Activated CD8-positive, alpha-beta T cell treated with anti-CD3 and anti-CD28 coated beads, Interleukin-2, amount 10 ng/mL, durations not matched to agents 7 days and 5 days (primary cell): ENCODE measurements at regions of chr12 and their contacts with region 1.

Region 1: GRCh38 chr12:14167005-14167628 is 185.7 kb upstream of the GRIN2B start:
- DNase-seq: peak; percentile 50
- ATAC-seq: no peak
- H3K4me3 Mint-ChIP-seq: no peak overlapping the region
- H3K27ac Mint-ChIP-seq: no peak overlapping the region
- H3K4me1 Mint-ChIP-seq: no peaks in the 10 kb centered on the region
- H3K27me3 Mint-ChIP-seq: no peaks in the 10 kb centered on the region

Region 2: GRCh38 chr12:13864081-13864673 is 302.9 kb before region 1 on chr12:
- CTCF ChIA-PET with region 1: interaction called, 15 read pairs
- POLR2A ChIA-PET with region 1: no interaction called
- DNase-seq: peak; percentile 65
- ATAC-seq: peak; percentile 75
- H3K4me3 Mint-ChIP-seq: no peak overlapping the region
- H3K27ac Mint-ChIP-seq: no peak overlapping the region
- H3K4me1 Mint-ChIP-seq: no peaks in the 10 kb centered on the region
- H3K27me3 Mint-ChIP-seq: peaks cover 5% of the 10 kb centered on the region

Region 3: GRCh38 chr12:14111230-14111865 is 55.8 kb before region 1 on chr12:
- CTCF ChIA-PET with region 1: interaction called, 13 read pairs
- POLR2A ChIA-PET with region 1: no interaction called
- DNase-seq: peak; percentile 33
- ATAC-seq: peak; percentile 44
- H3K4me3 Mint-ChIP-seq: no peak overlapping the region
- H3K27ac Mint-ChIP-seq: no peak overlapping the region
- H3K4me1 Mint-ChIP-seq: peaks cover 4% of the 10 kb centered on the region
- H3K27me3 Mint-ChIP-seq: no peaks in the 10 kb centered on the region

Region 4: DNA sequence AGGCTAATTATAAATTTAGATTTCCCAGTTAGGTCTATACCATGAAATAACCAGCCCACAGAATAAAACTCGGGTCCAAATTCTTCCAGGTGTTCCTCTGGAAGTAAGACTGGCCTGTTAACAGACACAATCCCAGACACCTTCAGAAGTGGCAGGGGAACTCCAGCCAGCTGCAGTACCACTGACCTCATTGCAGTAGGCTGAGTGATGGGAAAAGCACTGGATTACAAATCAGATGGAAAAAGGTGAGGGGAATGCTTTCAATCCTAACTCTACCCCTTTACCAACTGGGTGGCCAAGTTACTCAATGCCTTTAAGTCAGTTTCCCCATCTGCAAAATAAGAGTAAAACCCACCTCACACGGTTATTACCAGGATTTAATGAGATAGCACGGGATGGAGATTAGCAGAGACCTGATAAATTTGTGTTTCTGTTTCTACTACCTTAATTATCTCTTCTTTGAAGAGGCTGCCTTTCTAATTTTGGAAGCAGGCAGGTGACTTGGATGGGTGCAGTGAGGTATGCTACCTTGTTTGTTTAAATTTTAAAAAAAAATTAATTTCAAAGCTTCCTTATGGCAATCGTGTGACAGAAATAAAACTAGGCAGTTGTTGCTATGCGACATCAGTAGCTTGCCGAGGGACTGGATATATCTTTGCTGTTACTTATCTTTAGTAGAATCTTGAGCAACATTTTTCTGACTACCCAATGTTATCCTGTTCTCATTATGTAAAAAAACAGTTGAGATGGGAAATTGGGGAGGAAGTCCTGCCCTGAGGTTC is 18.4 kb before region 1 on chr12:
- CTCF ChIA-PET with region 1: no interaction called
- POLR2A ChIA-PET with region 1: no interaction called
- DNase-seq: no peak
- ATAC-seq: no peak
- H3K4me3 Mint-ChIP-seq: no peak overlapping the region
- H3K27ac Mint-ChIP-seq: no peak overlapping the region
- H3K4me1 Mint-ChIP-seq: no peaks in the 10 kb centered on the region
- H3K27me3 Mint-ChIP-seq: peaks cover 5% of the 10 kb centered on the region

Region 5: DNA sequence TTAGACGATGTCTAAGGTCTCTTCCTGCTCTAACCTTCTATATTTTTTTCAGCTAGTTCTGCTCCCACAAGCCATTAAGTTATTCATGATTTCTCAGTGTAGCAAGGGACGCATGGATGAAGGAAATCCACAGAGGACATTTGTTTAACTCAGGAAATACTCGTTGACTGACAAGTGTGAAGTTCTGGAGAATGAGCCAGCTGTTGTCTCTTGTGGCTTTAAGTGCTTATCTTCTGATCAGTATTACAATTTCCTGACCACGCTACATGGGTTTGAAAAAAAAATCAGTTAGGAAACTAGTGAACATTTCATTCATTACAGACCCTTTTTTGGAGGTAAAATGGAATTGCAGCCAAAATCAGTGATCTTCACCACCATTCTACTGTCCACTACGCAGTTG is 476.1 kb after region 1 on chr12:
- CTCF ChIA-PET with region 1: no interaction called
- POLR2A ChIA-PET with region 1: no interaction called
- DNase-seq: no peak
- ATAC-seq: peak; percentile 64
- H3K4me3 Mint-ChIP-seq: peak overlapping the region; percentile 50
- H3K27ac Mint-ChIP-seq: peak overlapping the region; percentile 72
- H3K4me1 Mint-ChIP-seq: peaks cover 23% of the 10 kb centered on the region
- H3K27me3 Mint-ChIP-seq: peaks cover 5% of the 10 kb centered on the region